ENCODE measurements at regions of chr14 and their contacts with region 1.

Region 1: DNA sequence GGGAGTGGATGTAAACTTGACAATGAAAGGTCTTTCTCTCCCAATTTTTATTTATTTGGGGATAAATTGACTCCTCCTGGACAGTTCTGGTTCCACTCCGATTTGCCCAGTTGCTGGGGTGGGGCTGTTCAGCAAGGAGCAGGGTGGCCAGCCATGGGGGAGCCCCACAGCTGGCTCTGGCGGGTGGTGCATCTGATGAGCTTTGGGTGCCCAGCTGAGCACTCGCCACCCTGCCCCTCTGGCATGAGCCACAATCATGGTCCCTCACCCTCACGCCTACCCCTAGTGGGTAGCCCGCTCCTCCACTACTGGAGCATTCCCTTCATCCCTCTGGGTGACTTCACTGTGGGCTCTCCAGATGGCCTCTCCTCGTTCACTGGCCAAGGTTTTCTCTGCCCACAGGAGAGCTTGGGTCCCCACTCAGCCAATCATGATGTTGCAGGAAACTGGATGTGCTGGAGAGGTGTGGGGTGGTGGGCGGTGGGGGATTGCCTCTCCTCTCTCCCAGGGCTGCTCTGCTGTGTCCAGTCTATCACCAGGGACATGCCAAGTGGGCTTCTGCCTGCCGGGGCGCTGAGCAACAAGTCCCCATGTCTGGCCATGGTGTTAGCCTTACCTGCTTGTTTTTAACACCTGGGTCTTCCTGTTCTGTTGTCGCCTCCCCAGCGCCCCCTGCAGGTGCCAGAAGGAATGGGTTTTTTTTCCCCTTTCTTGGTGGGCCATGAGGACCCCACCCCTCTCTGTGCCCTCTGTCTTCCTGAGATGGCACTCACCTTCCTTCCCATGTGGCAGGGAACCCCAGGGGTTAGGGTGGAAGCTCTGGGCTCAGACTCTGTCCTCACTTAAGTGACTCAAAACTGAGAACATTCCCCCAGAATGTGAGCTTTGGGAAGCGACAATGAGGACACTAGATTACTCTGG is 3.5 kb downstream of the CYP46A1 start:
- DNase-seq: peak; percentile 45
- H3K4me3 Mint-ChIP-seq: no peak overlapping the region
- H3K27ac Mint-ChIP-seq: no peak overlapping the region
- H3K4me1 Mint-ChIP-seq: peaks cover 18% of the 10 kb centered on the region
- H3K27me3 Mint-ChIP-seq: peaks cover 87% of the 10 kb centered on the region

Region 2: GRCh38 chr14:99698642-99699041 is 11.1 kb after region 1 on chr14:
- CTCF ChIA-PET with region 1: interaction called, 11 read pairs
- DNase-seq: no peak
- H3K4me3 Mint-ChIP-seq: no peak overlapping the region
- H3K27ac Mint-ChIP-seq: no peak overlapping the region
- H3K4me1 Mint-ChIP-seq: peaks cover 12% of the 10 kb centered on the region
- H3K27me3 Mint-ChIP-seq: peaks cover 30% of the 10 kb centered on the region

Measured in activated naive CD4-positive, alpha-beta T cell treated with anti-CD3 and anti-CD28 coated beads, Interleukin-2, amount 10 ng/mL, durations not matched to agents 7 days and 5 days (primary cell).